ENCODE measurements at regions of chr21 and their contacts with region 1.

Region 1: DNA sequence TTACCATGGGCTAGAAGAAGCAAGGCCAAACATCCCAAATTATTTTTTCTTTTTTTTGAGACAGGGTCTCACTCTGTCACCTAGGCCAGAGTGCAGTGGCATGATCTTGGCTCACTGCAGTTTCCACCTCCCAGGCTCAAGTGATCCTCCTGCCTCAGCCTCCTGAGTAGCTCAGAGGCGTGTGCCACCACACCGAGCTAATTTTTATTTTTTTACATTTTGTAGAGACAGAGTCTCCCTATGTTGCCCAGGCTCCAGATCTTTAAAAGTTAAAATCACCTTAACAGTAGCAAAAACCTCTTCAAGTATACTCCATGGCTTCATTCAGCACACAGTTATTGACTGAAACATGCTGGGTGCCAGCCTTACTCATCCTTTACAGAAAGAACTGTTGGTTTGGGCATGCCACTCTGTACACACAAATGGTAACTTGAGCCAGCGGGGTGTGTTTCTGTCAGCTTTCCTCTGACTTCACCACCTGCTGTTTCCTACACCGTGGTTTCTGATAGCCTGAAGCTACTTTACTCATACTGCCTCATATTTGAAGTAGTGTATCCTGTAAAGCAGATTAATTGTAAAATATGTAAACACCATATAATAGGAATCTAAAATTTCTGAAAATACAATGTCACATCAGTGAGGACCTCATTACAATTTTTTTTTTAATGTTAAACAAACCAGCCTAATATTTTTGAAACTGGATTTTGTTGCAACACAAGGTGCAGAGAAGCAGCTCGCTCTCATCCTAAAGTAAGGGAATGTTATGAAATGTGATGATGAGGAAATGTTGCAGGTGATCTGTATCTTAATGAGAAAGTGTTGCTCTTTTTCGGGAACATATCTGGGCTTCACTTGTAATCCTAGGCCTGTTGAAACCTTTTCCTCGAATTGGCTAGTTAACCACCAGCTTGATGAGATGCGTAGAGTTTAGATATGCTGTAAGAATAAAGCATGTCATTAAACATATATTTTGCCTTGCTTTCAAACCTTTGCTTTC is 113.9 kb downstream of the ATP5PO start:
- DNase-seq: peak; percentile 80
- ATAC-seq: peak; percentile 94
- H3K4me3 ChIP-seq: no peak overlapping the region
- H3K27ac ChIP-seq: no peak overlapping the region
- H3K4me1 ChIP-seq: no peaks in the 10 kb centered on the region
- H3K27me3 ChIP-seq: no peaks in the 10 kb centered on the region
- CTCF ChIP-seq: no peak
- POLR2A ChIP-seq: no peak
- RAD21 ChIP-seq: no peak

Region 2: GRCh38 chr21:33783187-33783979 is 18.3 kb before region 1 on chr21:
- CTCF ChIA-PET with region 1: no interaction called
- POLR2A ChIA-PET with region 1: interaction called, 12 read pairs
- dilution Hi-C with region 1: no loop called
- in situ Hi-C with region 1: no loop called
- intact Hi-C with region 1: no loop called
- DNase-seq: no peak
- ATAC-seq: no peak
- H3K4me3 ChIP-seq: no peak overlapping the region
- H3K27ac ChIP-seq: no peak overlapping the region
- H3K4me1 ChIP-seq: no peaks in the 10 kb centered on the region
- H3K27me3 ChIP-seq: no peaks in the 10 kb centered on the region
- CTCF ChIP-seq: no peak
- POLR2A ChIP-seq: no peak
- RAD21 ChIP-seq: no peak

Region 3: DNA sequence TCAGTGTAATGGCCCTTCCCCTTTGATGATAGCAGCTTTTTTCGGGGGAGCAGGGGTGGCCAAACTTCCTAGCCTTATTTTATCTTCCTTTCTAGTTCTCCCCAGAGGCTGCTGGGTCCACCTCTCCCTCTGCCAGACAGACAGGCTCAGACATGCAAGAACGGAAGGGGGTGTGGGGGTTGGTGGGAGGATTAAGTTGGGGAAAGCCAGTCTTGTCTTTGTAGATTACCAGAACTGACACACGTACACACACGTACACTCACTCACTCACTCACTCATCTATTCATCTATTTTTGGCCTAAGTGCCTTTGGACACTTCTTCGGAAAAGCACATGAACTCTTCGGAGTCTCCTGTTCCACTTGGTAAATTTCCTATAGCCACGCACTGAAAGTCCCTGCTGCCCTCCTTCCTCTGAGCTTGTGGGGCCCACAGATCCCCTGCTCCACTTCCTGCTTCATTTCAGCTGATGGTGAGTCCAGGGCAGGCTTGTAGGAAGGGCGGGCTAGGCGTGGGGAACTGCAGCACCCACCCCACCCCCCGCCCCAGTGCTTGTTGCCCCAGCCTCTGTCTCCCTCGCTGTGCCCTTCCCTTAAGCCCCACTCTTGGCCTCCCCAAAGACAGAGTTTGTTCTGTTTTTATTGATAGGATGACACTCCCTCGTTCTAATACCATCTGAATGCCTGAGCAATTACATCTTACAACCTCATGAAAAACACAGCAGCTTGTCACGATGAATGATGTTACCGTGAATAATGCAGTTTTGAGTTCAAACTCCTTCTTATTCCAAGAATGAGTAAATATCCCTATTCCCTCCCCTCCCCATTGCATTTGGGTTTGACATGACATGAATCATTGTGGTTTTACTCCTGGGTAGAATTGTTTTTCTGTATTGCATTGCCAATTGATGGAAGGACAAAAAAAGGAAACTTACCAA is 174.6 kb after region 1 on chr21:
- CTCF ChIA-PET with region 1: no interaction called
- POLR2A ChIA-PET with region 1: no interaction called
- dilution Hi-C with region 1: no loop called
- in situ Hi-C with region 1: no loop called
- intact Hi-C with region 1: no loop called
- DNase-seq: peak; percentile 94
- ATAC-seq: peak; percentile 79
- H3K4me3 ChIP-seq: no peak overlapping the region
- H3K27ac ChIP-seq: peak overlapping the region; percentile 89
- H3K4me1 ChIP-seq: peaks cover 19% of the 10 kb centered on the region
- H3K27me3 ChIP-seq: no peaks in the 10 kb centered on the region
- CTCF ChIP-seq: no peak
- POLR2A ChIP-seq: no peak
- RAD21 ChIP-seq: no peak

Region 4: GRCh38 chr21:34202553-34203372 is 401.0 kb after region 1 on chr21:
- CTCF ChIA-PET with region 1: no interaction called
- POLR2A ChIA-PET with region 1: no interaction called
- dilution Hi-C with region 1: no loop called
- in situ Hi-C with region 1: no loop called
- intact Hi-C with region 1: no loop called
- DNase-seq: no peak
- ATAC-seq: no peak
- H3K4me3 ChIP-seq: no peak overlapping the region
- H3K27ac ChIP-seq: no peak overlapping the region
- H3K4me1 ChIP-seq: peaks cover 15% of the 10 kb centered on the region
- H3K27me3 ChIP-seq: no peaks in the 10 kb centered on the region; the same call in 1 of the 2 replicates
- CTCF ChIP-seq: no peak
- POLR2A ChIP-seq: no peak
- RAD21 ChIP-seq: no peak

Region 5: DNA sequence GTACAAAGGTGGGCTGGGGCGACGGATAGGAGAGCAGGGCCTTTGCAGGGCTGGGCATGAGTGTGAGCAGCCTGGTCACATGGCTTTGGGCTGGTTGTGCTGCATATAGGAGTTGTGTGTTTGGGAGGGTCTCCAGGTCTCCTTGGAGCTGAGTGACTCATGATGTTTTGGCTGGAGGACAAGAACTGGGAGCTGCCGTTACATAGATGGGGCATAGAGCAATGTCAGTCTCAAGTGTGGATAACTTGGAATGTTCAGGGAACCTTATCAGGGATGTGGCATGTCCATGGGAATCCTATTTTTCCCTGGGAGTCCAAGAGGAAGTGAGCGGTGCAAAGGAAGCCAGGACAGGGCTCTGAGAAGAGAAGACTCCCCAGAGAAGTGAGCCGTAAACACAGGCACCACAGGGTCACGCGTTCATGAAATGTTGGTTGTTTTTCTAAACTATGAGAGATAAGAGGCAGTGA is 425.7 kb after region 1 on chr21:
- CTCF ChIA-PET with region 1: no interaction called
- POLR2A ChIA-PET with region 1: no interaction called
- dilution Hi-C with region 1: no loop called
- in situ Hi-C with region 1: no loop called
- intact Hi-C with region 1: no loop called
- DNase-seq: peak; percentile 45
- ATAC-seq: peak; percentile 90
- H3K4me3 ChIP-seq: no peak overlapping the region
- H3K27ac ChIP-seq: no peak overlapping the region
- H3K4me1 ChIP-seq: peaks cover 8% of the 10 kb centered on the region; the same call in 1 of the 2 replicates
- H3K27me3 ChIP-seq: peaks cover 18% of the 10 kb centered on the region
- CTCF ChIP-seq: no peak
- POLR2A ChIP-seq: no peak
- RAD21 ChIP-seq: no peak

Region 6: DNA sequence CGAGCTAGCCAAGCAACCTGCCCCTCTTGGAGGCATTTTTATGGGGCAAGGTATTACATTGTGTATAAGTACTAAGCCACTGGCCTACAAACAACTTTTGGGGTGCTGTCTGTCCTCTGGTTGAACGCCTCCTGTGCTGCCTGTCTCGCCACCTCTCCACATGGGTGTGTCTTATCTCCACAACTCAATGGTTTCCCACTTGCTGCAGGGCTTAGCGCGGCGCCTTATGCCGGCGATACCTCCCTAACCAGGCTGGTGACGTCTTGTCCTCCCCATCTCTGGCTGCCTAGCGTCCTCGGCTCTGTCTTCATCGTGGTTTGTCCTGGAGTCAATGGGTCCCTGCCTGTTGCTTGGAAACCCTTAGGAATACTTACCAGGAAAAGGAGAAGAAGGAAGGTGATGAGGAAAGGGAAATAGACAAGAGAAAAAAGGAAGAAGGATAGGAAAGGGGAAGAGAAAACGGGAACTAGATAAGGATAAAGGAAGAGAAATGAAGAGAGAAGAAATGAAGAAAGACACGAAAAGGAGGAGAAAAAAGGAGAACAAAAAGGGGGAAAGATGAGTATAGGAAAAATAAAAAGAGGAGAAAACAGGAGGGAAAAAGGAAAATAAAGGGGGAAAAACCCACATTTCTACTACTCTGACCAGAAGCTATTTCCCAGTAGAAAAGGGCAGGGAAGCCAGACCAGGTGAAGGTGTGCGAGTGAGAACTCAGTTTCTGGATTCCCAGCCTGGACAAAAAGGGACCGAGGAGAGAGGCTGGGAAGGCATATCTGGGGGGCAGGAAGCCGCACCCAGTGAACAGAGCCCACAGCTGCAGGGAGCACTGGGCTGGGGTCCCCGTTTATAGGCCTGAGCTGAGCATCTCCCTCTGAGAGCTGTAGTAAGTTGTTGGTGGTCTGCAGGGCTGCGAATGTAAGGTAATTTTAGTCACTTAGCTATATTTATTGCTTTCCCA is 953.2 kb after region 1 on chr21:
- CTCF ChIA-PET with region 1: no interaction called
- POLR2A ChIA-PET with region 1: no interaction called
- dilution Hi-C with region 1: no loop called
- in situ Hi-C with region 1: no loop called
- intact Hi-C with region 1: no loop called
- DNase-seq: no peak
- ATAC-seq: no peak
- H3K4me3 ChIP-seq: no peak overlapping the region
- H3K27ac ChIP-seq: no peak overlapping the region
- H3K4me1 ChIP-seq: peaks cover 3% of the 10 kb centered on the region; the same call in 1 of the 2 replicates
- H3K27me3 ChIP-seq: peaks cover 9% of the 10 kb centered on the region; the same call in 1 of the 2 replicates
- CTCF ChIP-seq: no peak
- POLR2A ChIP-seq: no peak
- RAD21 ChIP-seq: no peak